Calu3 (cell line): ENCODE measurements at regions of chr3 and their contacts with region 1.

Region 1: DNA sequence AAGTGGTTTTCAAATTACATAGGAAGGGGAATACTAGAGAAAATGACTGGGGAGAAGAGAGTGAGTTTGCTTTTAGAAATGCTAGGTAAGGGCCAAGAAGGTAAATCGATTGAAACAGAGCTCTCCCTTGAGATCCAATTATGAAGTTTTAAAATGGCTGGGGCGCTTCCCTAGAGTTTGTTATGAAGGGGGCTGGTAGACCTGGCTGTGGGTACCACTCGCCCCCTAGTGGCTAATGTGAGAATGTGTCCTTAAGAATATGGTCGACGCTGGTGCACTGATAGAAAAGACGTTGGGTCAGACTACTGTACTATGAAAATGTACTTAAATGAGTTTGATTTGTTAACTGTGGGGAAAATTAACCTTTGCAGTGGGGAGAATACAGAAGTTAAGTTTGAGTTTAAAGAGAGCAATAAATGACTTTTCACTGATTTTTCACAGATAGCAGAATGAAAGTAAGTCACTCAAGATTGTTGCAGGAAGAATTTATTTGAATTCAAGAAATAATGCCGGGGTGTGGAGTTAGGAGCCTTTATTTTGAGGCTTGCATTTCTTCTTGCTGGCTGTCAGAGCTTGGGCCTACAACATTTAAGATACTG is 9.2 kb downstream of the TMPRSS7 start:
- DNase-seq: peak; percentile 59
- H3K4me3 Mint-ChIP-seq: no peak overlapping the region
- H3K27ac Mint-ChIP-seq: no peak overlapping the region
- H3K4me1 Mint-ChIP-seq: peaks cover 24% of the 10 kb centered on the region
- H3K27me3 Mint-ChIP-seq: no peaks in the 10 kb centered on the region
- CTCF ChIP-seq: peak; percentile 38

Region 2: DNA sequence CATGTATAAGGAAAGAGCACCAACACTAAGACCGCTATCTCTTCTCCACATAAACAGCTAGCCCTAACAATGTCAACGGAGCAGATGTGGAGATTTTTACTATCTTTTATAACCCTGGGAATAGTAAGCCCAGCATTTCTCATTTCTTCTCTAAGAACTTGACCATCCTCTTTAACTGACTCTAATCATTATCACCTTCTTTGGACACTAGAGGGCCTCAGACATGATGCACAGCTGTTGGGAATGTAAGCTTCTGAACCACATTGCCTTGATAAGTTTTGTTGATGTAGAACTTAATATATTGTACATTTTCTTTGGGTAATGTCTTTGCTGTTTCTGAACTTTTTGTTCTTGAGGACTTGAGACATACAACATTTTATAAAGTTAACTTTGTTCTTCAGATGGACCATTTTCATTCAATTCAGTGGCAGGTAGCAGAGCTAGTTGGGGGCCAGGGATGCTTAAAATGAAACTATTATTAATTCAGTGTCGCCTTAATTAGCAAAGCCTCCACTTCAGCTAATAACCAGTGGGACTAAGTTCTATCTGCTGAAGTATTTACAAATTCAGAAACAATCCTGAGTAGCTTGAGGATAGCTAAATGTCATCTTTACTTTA is 54.5 kb before region 1 on chr3:
- CTCF ChIA-PET with region 1: interaction called, 9 read pairs
- intact Hi-C with region 1: loop called (anchors 1 kb)
- DNase-seq: peak; percentile 16
- H3K4me3 Mint-ChIP-seq: no peak overlapping the region
- H3K27ac Mint-ChIP-seq: no peak overlapping the region
- H3K4me1 Mint-ChIP-seq: no peaks in the 10 kb centered on the region
- H3K27me3 Mint-ChIP-seq: no peaks in the 10 kb centered on the region
- CTCF ChIP-seq: peak; percentile 27